Thyroid gland (tissue), 4 donors: ENCODE measurements at regions of chr18 and their contacts with region 1.

Region 1: DNA sequence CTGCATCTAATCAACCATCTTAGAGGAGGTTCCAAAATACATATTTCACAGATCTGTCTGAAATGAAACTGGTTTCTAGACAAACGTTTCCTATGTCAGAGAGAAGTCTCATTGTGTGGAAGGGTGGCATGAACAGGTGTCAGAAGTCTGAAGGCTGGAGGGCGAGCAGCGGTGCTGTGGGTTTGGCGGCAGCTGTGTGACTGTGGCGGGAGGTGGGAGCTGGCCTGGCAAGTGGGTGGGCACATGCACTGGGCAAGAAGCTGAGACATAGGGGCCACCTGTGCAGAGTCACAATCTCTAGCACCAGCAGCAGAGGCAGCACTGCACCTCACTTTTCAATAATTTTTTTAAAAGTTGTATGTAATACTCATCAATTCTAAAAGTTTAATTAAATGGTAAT is 346.3 kb downstream of the DSC3 start:
- DNase-seq: no peak
- H3K4me3 ChIP-seq: no peak overlapping the region
- H3K27ac ChIP-seq: no peak overlapping the region
- H3K4me1 ChIP-seq: no peaks in the 10 kb centered on the region
- H3K27me3 ChIP-seq: no peaks in the 10 kb centered on the region
- CTCF ChIP-seq: no peak
- POLR2A ChIP-seq: no peak

Region 2: GRCh38 chr18:30632071-30632698 is 64.0 kb before region 1 on chr18:
- intact Hi-C with region 1: loop called (anchors 10 kb)
- DNase-seq: no peak
- H3K4me3 ChIP-seq: no peak overlapping the region
- H3K27ac ChIP-seq: no peak overlapping the region
- H3K4me1 ChIP-seq: no peaks in the 10 kb centered on the region
- H3K27me3 ChIP-seq: no peaks in the 10 kb centered on the region
- CTCF ChIP-seq: no peak
- POLR2A ChIP-seq: no peak

Region 3: DNA sequence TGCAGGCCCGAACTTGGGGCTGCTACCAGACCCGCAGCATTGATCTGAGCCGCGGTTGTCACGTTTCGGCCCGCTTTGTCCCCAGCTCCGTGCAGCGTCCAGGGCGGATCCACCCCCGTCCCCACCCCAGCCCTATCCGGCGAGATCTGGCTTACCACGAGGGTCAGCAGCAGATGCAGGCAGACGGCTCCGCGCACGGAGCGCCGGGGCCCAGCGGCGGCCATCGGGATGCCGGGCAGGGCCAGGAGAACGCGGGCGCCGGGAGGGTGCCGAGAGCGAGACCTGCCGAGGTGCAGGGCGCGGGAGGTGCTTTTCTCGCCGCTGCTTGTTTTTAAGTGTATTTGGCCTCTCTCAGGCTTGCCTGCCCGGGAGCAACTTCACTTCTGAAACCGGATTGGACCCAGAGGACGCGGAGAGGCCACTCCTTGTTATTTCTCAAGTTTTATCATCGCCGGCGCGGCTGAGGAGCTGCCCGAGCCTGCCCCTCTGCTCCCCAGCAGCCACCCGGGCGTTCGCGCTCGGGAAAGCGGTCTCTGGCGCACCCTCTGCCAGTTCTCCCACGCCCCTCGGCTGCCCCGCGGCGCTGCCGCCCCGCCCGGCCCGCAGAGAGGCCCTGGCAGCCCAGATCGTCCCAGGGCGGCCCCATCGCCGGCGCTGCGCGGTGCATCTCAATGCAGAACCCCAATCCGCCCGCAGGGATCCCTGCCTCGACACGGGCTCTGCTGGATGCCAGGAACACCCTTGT is 346.4 kb after region 1 on chr18 and contains the start of gene DSC3:
- intact Hi-C with region 1: no loop called
- DNase-seq: peak; percentile 12 to 21
- H3K4me3 ChIP-seq: peak within 1 kb of the TSS in 2 of 3 donors; percentile 18 to 20
- H3K27ac ChIP-seq: no peak within 1 kb of the TSS
- H3K4me1 ChIP-seq: peaks cover 15 to 23% of the 10 kb centered on the region in 2 donors
- H3K27me3 ChIP-seq: peaks cover 25% of the 10 kb centered on the region
- CTCF ChIP-seq: no peak
- POLR2A ChIP-seq: no peak
- total RNA-seq, gene DSC3: 0.15 to 1.5 (median 0.33) TPM in 3 of 4 donors, not detected in the other